ENCODE measurements at regions of chr13 and their contacts with region 1.

Region 1: DNA sequence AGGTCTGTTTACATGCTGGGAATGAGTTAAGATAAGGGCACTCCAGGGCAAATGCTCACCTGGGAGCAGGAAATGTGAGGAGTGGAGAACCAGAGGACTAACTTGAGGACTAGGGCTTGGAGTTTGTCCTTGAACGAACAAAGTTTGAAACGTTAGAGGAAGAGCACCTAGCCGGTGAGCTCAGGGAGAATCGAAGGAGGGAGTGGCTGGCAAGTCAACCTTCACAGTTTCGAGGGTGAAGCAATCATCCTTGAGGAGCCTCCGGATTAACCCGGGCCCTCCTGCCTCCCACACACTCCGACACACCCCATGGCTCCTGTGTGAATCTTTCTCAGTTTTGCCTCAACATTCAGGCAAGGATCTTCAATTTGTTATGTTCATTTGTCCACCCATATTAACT is 58.6 kb downstream of the LMO7 start:
- DNase-seq: peak; percentile 60
- H3K4me3 ChIP-seq: no peak overlapping the region
- H3K27ac ChIP-seq: no peak overlapping the region
- H3K4me1 ChIP-seq: peaks cover 3% of the 10 kb centered on the region
- H3K27me3 ChIP-seq: no peaks in the 10 kb centered on the region
- CTCF ChIP-seq: no peak

Region 2: GRCh38 chr13:75803164-75803611 is 108.5 kb after region 1 on chr13:
- CTCF ChIA-PET with region 1: interaction called, 3 read pairs
- dilution Hi-C with region 1: no loop called
- in situ Hi-C with region 1: no loop called
- intact Hi-C with region 1: loop called (anchors 5 kb)
- DNase-seq: no peak
- H3K4me3 ChIP-seq: no peak overlapping the region
- H3K27ac ChIP-seq: no peak overlapping the region
- H3K4me1 ChIP-seq: peaks cover 4% of the 10 kb centered on the region
- H3K27me3 ChIP-seq: no peaks in the 10 kb centered on the region
- CTCF ChIP-seq: no peak

Region 3: GRCh38 chr13:75870397-75870903 is 175.7 kb after region 1 on chr13:
- CTCF ChIA-PET with region 1: interaction called, 3 read pairs
- dilution Hi-C with region 1: loop called (anchors 10 kb)
- in situ Hi-C with region 1: loop called (anchors 10 kb)
- intact Hi-C with region 1: loop called (anchors 1 kb)
- DNase-seq: no peak
- H3K4me3 ChIP-seq: peak overlapping the region; percentile 44 to 56 (median 55)
- H3K27ac ChIP-seq: peak overlapping the region; percentile 3
- H3K4me1 ChIP-seq: peaks cover 5% of the 10 kb centered on the region
- H3K27me3 ChIP-seq: peaks cover 1% of the 10 kb centered on the region
- CTCF ChIP-seq: peak; percentile 76 to 77

Region 4: DNA sequence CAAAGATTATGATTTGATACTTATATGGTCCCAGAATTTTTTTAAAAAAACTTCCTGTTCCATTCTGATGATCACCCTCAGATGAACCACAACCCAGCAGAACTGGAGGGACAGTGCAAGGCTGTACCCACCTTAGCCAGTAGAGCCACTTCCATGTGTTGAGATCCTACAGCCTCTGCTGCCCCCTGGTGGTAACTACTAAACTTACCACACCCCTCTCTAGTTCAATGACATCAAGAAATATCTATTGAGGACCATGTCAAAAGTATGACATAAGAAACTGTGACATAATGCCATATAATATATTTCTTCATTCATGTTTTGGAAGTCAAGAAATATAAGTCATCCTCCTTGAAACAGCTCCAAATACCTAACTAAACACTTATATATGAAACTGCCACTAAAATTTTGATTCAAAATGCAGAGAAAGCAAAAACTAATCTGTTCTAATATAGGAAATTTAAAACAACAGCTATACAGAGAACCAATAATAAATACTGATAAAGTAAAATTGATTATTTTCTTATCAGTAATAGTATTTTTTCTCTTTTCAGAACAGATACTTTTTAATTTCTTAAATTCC is 778.9 kb after region 1 on chr13:
- CTCF ChIA-PET with region 1: no interaction called
- dilution Hi-C with region 1: no loop called
- in situ Hi-C with region 1: loop called (anchors 10 to 25 kb)
- intact Hi-C with region 1: loop called (anchors 1 kb)
- DNase-seq: peak; percentile 57
- H3K4me3 ChIP-seq: no peak overlapping the region
- H3K27ac ChIP-seq: no peak overlapping the region
- H3K4me1 ChIP-seq: no peaks in the 10 kb centered on the region
- H3K27me3 ChIP-seq: peaks cover 2% of the 10 kb centered on the region
- CTCF ChIP-seq: peak; percentile 71 to 81